GM23248 (cell line): ENCODE measurements at regions of chr1 and their contacts with region 1.

Region 1: DNA sequence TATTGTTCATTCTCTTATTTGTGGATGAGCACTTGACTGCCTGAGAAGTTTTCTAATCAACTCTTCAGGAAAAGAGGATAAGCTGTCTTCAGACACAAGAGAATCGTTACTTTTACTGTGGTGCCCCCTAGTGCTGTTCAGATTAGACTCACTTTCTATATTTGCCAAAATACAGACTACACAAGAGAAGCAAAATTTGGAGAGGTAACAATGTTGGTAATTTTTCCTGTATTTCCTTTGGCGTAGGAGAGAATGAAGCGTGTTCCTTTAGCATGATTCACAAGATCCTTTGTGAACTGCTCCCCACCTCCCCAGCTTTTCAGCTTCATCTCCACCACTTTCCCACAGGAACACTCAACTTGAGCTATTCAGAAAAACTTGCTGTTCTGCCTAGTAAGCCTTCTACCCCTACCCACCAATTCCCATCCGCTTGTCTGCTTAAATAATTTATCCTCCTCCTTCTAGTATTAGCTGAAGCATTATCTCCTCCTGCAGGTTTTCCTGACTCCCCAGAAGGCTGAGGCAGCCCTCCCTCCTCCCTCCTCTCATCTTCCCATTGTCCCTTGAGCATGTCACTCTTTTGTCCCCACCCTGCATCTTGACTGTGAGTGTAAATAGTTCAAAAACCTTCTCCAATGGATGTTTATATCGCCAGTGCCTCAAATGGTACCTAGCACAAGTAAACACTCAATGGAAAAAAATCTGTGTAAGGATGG is 4.5 kb downstream of the TNFSF4 start:
- DNase-seq: peak; percentile 86
- H3K4me3 ChIP-seq: no peak overlapping the region
- H3K27ac ChIP-seq: peak overlapping the region; percentile 30
- H3K4me1 ChIP-seq: peaks cover 39% of the 10 kb centered on the region
- H3K27me3 ChIP-seq: no peaks in the 10 kb centered on the region

Region 2: DNA sequence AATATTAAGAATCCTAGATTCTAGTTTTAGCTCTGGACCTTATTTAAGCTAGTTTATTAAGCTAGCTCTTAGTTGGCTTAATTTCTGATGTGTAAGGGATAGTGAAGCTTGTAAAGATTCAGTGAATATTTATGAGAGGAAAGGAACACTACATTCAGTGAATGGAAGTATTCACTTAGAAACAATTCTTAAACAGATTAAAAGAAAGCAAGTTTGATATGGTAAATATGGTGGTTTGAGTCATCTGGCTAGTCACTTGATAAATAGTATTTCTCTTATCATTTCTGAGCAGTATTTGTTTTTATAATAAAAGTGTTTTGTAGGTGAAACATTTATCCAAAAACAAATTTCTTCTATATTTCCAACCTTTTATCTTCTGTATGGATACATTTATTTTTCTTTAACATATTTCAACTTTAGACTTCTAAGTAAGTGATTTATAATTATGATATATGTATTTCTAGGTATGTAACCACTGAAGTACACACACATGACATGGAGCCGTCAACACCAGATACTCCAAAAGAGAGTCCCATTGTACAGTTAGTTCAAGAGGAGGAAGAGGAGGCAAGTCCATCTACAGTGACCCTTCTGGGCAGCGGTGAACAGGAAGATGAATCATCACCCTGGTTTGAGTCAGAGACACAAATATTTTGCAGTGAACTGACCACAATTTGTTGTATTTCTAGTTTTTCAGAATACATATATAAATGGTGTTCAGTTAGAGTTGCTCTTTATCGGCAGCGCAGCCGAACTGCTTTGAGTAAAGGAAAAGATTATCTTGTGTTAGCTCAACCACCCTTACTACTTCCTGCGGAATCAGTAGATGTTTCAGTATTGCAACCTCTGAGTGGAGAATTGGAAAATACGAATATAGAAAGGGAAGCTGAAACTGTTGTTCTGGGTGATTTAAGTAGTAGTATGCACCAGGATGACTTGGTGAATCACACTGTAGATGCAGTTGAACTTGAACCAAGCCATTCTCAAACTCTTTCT is 614.0 kb before region 1 on chr1:
- in situ Hi-C with region 1: no loop called
- DNase-seq: peak; percentile 90
- H3K4me3 ChIP-seq: peak overlapping the region; percentile 32
- H3K27ac ChIP-seq: peak overlapping the region; percentile 70
- H3K4me1 ChIP-seq: peaks cover 50% of the 10 kb centered on the region
- H3K27me3 ChIP-seq: no peaks in the 10 kb centered on the region

Region 3: DNA sequence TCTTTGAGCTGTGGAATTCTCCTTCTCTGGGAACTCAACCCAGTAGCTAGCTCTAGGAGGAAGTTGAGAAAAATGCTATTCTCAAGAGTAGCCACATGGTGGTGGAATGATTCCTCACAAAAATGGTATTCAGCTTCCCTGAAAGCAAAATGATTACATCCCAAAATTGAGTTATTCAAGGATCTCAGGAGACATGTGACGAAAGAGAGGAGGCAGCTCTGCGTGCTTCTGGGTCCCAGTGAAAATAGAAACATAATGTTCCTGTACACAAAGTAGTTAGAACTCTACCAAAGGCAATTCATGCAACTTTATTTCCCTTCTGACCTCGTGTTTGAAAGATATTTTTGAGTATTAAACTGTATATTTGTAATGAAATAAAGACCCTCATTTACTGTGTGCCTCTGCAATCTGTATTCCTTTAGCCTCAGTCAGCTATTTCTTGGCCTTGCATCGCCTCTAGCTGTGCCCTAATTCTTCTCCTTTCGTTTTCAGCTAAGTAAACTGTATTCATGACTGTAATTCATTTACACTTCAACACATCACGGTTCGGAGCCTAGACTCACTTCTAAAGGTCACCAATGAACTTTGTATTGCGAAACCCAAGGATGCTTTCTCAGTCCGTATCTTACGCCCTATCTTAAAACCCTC is 376.4 kb before region 1 on chr1:
- in situ Hi-C with region 1: loop called (anchors 10 kb)
- DNase-seq: peak; percentile 92
- H3K4me3 ChIP-seq: peak overlapping the region; percentile 36
- H3K27ac ChIP-seq: peak overlapping the region; percentile 59
- H3K4me1 ChIP-seq: peaks cover 40% of the 10 kb centered on the region
- H3K27me3 ChIP-seq: no peaks in the 10 kb centered on the region

Region 4: DNA sequence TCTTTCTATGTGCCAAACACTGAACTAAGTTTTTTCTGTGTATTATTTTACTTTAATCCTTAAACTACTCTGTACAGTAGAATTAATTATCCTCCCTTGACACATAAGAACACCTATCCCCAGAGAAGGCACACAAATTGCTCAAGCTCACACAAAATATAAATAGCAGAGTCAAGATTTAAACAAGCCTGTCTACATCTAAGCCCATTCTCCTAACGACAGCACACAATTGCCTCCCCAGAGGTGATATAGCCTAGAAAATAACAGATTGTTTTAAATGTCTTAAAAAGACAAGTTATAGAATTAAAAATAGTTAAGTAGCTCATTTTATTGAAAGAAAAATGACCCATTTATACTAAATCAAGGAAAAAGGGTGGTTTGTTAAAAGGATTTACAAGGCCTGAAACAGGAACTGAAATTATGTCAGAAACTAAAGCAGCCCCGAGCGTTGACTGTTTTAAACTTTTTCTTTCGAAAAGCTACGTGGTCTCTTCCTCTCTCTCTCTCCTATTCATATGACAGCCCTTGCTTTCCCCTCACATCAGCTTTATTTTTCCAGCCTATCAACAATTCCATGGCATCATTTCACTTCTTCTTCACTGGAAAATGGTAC is 182.3 kb before region 1 on chr1:
- in situ Hi-C with region 1: no loop called
- DNase-seq: no peak
- H3K4me3 ChIP-seq: no peak overlapping the region
- H3K27ac ChIP-seq: no peak overlapping the region
- H3K4me1 ChIP-seq: no peaks in the 10 kb centered on the region
- H3K27me3 ChIP-seq: no peaks in the 10 kb centered on the region